Posterior vena cava (tissue), 2 donors: ENCODE measurements at regions of chr14 and their contacts with region 1.

Region 1: DNA sequence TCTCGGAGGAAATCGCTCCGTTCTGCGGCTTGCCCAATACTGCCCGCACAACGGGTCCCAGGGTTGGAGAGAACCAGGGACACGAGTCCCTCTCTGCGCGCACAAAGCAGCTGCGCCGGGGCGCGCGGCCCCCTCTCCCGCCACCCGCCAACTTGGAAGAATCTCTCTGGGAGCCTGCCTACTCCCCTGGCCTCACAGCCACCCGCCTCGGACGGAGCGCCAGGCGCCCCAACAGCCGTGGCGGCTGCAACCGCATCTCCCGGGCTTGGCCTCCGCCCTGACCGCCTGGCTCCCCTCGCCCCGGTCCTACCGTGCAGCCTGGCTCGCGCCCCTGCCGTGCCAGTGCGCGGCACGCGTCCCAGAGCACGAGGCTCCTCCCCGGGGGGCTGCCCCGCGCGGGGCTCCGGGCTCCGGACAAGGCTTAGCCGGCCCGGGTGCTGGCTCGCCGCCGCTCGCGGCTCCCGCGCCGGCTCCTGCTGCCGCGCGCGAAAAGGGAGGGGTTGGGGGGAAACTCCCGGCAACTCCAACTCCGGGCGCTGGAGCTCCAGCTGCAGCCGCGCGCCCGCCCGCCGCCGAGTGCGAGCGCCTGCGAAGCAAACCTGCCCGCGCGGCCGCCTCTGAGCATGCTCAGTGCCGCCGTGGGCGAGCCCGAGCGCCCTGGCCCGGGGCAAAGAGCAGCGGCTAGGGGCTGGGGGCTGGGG is at the start of gene STXBP6:
- DNase-seq: peak; percentile 87
- total RNA-seq, gene STXBP6: 8.9 to 14.9 TPM

Region 2: GRCh38 chr14:24817212-24818057 is 232.3 kb before region 1 on chr14:
- intact Hi-C with region 1: loop called in 1 of 2 experiments (anchors 10 kb)
- DNase-seq: no peak

Region 3: DNA sequence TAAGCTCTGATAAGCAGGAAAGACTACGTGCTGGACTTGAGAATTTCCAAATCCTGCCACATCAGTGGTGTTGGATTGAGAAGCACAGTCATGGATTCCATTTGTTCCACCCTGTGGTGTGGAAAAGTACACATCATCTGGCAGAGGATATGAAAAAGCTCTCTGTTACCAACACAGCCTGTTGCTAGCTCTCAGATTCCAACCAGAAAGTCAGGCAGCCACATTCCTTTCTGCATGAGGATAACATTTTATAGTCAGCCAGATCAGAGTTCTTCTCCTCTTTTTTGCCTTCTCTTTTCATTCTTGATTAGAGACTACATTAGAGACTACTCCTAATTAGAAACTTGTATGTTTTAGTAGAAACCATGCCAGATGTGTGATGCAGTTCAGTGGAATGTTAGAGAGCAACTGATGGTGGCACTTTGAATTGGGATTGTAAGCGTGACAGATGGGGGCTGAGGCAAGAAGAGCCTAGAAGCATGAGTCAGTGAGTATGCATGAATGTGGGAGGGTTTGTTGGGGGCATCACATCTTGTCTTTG is 61.4 kb after region 1 on chr14:
- intact Hi-C with region 1: loop called in 1 of 2 experiments (anchors 10 kb)
- DNase-seq: no peak

Region 4: DNA sequence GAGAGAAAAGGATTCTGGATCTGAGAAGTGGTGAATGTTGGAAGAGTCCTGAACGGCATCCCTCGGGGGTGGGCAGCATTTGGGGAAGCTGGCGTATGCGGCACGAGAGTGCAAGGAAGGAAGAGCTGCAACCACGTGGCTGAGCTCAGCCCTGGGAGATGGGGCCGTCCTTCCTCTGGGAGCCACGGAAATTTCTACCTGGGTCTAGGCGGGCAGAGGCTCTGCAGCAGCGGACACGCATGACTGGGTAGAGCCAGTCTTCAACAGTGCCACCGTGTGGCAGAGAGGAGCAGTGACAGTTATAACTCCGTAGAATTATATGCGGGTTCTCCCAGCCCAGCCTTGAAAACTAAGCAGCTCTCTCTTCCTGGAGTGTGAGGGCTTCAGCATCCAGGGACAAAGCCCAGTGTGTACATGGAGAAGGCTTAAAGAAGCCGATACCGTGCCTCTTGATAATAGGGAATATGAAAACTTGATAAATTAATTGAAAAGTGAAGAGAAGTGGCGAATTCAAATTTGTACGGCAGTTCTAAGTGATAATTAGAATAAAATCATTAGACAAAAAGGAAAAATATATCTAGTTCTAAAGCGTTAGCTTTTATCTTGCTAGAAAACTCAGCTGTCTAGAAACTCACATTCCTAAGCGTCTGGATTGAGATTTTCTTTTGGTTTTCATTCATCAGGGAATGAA is 83.2 kb after region 1 on chr14:
- intact Hi-C with region 1: loop called in 1 of 2 experiments (anchors 10 kb)
- DNase-seq: peak; percentile 87